Panc1 (cell line): ENCODE measurements at regions of chr5 and their contacts with region 1.

Region 1: GRCh38 chr5:113749334-113749733 is 235.8 kb downstream of the YTHDC2 start:
- DNase-seq: no peak
- ATAC-seq: no peak
- H3K4me3 ChIP-seq: no peak overlapping the region
- H3K27ac ChIP-seq: no peak overlapping the region
- H3K4me1 ChIP-seq: no peaks in the 10 kb centered on the region
- H3K27me3 ChIP-seq: no peaks in the 10 kb centered on the region
- CTCF ChIP-seq: no peak

Region 2: GRCh38 chr5:113900807-113901206 is 151.5 kb after region 1 on chr5:
- CTCF ChIA-PET with region 1: interaction called, 11 read pairs
- POLR2A ChIA-PET with region 1: no interaction called
- in situ Hi-C with region 1: no loop called
- intact Hi-C with region 1: no loop called
- DNase-seq: no peak
- ATAC-seq: no peak
- H3K4me3 ChIP-seq: no peak overlapping the region
- H3K27ac ChIP-seq: no peak overlapping the region
- H3K4me1 ChIP-seq: no peaks in the 10 kb centered on the region
- H3K27me3 ChIP-seq: no peaks in the 10 kb centered on the region
- CTCF ChIP-seq: no peak